Gastrocnemius medialis (tissue), 4 donors: ENCODE measurements at regions of chr18 and their contacts with region 1.

Region 1: GRCh38 chr18:73959352-73959751 is 188.3 kb downstream of the FBXO15 start:
- DNase-seq: no peak
- ATAC-seq: no peak
- H3K4me3 ChIP-seq: no peak overlapping the region
- H3K27ac ChIP-seq: no peak overlapping the region
- H3K4me1 ChIP-seq: no peaks in the 10 kb centered on the region
- H3K27me3 ChIP-seq: no peaks in the 10 kb centered on the region
- CTCF ChIP-seq: no peak
- POLR2A ChIP-seq: no peak

Region 2: GRCh38 chr18:73891572-73892421 is 67.6 kb before region 1 on chr18:
- in situ Hi-C with region 1: loop called in 1 of 4 experiments (anchors 10 kb)
- intact Hi-C with region 1: no loop called
- DNase-seq: no peak
- ATAC-seq: no peak
- H3K4me3 ChIP-seq: no peak overlapping the region
- H3K27ac ChIP-seq: no peak overlapping the region
- H3K4me1 ChIP-seq: no peaks in the 10 kb centered on the region
- H3K27me3 ChIP-seq: no peaks in the 10 kb centered on the region
- CTCF ChIP-seq: no peak
- POLR2A ChIP-seq: no peak